Activated CD4-positive, alpha-beta T cell treated with anti-CD3 and anti-CD28 coated beads, Interleukin-2, amount 10 ng/mL, durations not matched to agents 7 days and 5 days (primary cell): ENCODE measurements at regions of chr16 and their contacts with region 1.

Region 1: DNA sequence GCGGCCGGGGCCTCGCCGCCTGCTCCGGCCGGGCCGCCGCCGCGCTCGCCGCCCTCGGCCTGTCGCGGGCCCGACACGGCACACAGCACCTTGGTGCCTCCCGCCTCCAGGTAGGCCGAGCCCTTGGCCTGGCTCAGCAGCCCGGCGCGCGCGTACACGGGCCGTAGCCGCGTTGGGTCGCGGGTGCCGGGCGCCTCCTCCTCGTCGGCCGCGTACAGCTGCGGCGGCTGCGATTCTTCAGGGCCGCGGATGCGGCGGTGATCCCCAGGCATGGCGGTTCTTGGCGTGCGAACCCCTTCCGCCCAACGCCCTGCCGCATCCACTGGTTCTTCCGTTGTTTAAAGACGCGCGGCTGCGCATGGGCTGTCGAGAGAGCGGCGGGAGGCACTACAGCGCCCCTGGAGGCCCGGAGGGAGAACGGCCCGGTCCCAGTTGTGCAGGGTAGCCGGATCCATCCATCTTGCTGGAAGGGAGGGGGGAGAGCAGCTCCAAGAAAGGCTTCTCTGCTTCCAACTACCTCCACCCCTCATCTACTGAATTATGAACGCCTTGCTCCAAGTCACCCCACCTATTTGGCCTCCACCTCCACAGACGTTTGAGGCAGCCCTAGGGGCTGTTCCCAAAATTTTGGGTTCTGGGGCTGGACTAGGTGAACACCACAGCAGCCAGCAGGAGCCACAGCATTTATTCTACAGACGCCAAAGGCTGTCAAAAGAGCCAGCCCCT is at the start of gene EXOSC6:
- DNase-seq: peak; percentile 94
- H3K4me3 Mint-ChIP-seq: peak within 1 kb of the TSS; percentile 88
- H3K27ac Mint-ChIP-seq: peak within 1 kb of the TSS; percentile 95
- H3K4me1 Mint-ChIP-seq: peaks cover 21% of the 10 kb centered on the region
- H3K27me3 Mint-ChIP-seq: no peaks in the 10 kb centered on the region
- total RNA-seq, gene EXOSC6: 26.3 to 27.4 TPM

Region 2: GRCh38 chr16:70267516-70267915 is 15.7 kb after region 1 on chr16:
- CTCF ChIA-PET with region 1: interaction called, 29 read pairs
- POLR2A ChIA-PET with region 1: interaction called, 3 read pairs
- DNase-seq: no peak
- H3K4me3 Mint-ChIP-seq: no peak overlapping the region
- H3K27ac Mint-ChIP-seq: no peak overlapping the region
- H3K4me1 Mint-ChIP-seq: no peaks in the 10 kb centered on the region
- H3K27me3 Mint-ChIP-seq: no peaks in the 10 kb centered on the region

Region 3: DNA sequence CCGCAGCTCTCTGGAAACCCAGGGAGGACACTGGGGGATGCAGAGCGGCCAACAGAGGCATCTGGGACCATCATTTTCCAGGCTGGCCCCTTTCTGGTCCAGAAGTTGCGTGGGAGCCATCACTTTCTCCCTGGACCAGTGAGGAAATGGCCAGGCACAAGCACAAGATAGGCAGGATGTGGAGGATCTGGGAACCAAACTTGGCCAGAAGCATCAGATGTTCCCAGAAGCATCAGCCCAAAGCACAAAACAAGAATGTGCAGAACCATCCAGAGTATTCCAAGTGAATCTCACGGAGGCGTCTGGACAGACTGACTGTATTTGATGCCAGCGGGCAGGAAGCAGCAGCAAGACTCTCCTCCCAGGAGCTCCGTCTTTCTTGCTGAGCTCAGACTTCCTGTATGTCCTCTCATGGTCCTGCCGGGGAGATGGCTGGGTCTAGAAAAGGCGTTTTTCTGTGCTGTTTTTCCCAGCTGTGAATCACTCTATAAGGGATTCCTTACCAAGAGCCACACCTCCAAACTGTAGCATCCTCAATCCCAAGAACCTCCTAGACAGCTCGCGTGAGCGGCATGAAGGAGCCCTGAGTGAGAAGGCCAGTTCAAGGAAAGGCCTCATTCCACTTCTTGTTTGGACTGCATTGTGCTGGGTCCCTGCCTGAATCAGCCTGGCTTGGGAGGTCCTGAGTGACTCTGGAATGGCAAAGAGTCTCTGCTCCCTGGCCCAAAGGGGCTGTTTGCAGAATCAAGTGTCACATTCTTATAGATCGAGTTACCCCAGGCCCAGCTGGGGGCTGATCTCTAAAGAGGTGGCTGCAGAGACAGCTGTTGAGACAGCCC is 483.6 kb after region 1 on chr16:
- CTCF ChIA-PET with region 1: no interaction called
- POLR2A ChIA-PET with region 1: no interaction called
- DNase-seq: no peak
- H3K4me3 Mint-ChIP-seq: no peak overlapping the region
- H3K27ac Mint-ChIP-seq: peak overlapping the region; percentile 100
- H3K4me1 Mint-ChIP-seq: peaks cover 62% of the 10 kb centered on the region
- H3K27me3 Mint-ChIP-seq: no peaks in the 10 kb centered on the region

Region 4: DNA sequence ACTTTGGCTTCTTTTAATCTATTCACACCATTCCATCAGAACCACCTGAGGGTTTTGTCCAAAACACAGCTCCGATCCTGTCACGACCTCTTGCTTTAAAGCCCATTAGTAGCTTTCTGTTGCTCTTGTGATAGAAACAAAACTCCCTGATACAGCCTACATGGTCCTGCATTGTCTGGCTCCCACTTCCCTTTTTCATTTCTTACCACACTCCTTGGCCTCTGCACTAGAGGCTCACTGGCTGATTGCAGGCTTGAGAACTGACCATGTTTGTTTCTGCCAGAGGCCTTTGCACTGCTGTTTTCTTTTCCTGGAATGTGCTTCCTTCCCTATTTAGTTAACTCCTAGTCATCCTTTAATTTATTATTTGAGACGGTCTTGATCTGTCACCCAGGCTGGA is 1667.2 kb after region 1 on chr16:
- CTCF ChIA-PET with region 1: no interaction called
- POLR2A ChIA-PET with region 1: no interaction called
- DNase-seq: no peak
- H3K4me3 Mint-ChIP-seq: no peak overlapping the region
- H3K27ac Mint-ChIP-seq: no peak overlapping the region
- H3K4me1 Mint-ChIP-seq: peaks cover 33% of the 10 kb centered on the region
- H3K27me3 Mint-ChIP-seq: no peaks in the 10 kb centered on the region